ENCODE measurements at regions of chr15 and their contacts with region 1.

Region 1: DNA sequence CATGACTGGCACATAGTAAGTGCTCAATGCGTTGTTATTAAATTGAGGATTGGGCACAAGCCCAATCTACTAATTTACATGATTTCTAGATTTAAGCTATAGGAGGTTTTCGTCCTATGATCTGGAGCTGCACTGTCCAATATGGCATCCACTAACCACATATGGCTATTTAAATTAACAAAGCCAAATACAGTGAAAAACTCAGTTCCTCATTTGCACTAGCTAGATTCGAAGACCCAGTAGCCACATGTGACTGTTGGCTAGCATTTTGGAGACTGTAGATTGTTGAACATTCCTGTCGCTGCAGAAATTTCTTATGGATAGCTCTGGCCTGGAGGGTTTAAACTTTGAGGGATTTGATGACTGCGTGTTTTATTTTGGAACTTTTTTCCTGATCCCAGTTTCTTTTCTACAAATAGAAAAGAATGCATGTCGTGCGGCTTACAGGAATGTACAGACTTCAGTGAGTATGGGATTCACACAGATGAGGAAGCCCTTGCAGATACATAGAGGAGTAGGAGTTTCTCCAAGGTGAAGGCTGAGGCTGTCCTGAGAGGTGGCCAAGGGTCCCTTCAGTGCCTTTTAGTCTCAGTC is 82.8 kb downstream of the SLCO3A1 start:
- DNase-seq: no peak
- ATAC-seq: no peak
- H3K4me3 ChIP-seq: no peak overlapping the region
- H3K4me3 Mint-ChIP-seq: no peak overlapping the region
- H3K27ac ChIP-seq: no peak overlapping the region
- H3K27ac Mint-ChIP-seq: no peak overlapping the region
- H3K4me1 ChIP-seq: no peaks in the 10 kb centered on the region
- H3K4me1 Mint-ChIP-seq: peaks cover 25% of the 10 kb centered on the region
- H3K27me3 ChIP-seq: no peaks in the 10 kb centered on the region
- H3K27me3 Mint-ChIP-seq: no peaks in the 10 kb centered on the region
- CTCF ChIP-seq: no peak

Region 2: DNA sequence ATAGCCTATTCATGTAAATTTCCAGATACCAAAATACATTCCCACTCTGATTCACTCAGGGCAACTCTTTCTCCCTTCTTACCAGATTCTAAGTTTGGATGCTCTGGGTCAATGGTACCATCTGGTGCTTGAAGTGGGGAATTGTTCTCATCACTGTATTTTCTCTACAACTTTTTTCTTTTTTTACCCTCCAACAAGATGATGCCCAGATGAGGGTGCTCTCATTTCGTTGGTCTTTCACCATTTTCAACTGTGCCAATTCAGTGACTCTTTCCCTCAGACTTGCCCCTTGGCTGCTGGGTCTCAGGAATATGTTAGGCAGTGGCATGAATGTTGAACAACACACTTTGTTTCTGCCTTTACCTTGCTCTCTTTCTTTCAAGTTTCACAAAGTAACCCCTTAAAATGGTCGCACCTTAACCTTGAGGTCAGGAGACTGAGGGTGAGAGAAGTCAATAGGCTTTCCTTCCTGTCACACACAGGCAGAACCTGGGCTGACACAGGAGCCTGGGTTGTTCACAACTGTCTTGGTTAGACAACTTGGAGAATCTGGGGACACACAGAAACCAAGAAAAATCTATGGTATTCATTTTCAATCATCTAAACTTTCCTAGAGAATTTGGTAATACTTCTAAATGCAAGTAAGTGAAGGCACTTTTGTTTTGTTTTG is 413.5 kb before region 1 on chr15:
- CTCF ChIA-PET with region 1: no interaction called
- POLR2A ChIA-PET with region 1: no interaction called
- intact Hi-C with region 1: loop called in 1 of 2 experiments (anchors 5 kb)
- DNase-seq: peak in 2 of 9 experiments; percentile 56 to 66
- ATAC-seq: no peak
- H3K4me3 ChIP-seq: no peak overlapping the region
- H3K4me3 Mint-ChIP-seq: no peak overlapping the region
- H3K27ac ChIP-seq: no peak overlapping the region
- H3K27ac Mint-ChIP-seq: peak overlapping the region; percentile 33
- H3K4me1 ChIP-seq: peaks cover 14% of the 10 kb centered on the region
- H3K4me1 Mint-ChIP-seq: peaks cover 11% of the 10 kb centered on the region
- H3K27me3 ChIP-seq: no peaks in the 10 kb centered on the region
- H3K27me3 Mint-ChIP-seq: peaks cover 10% of the 10 kb centered on the region
- CTCF ChIP-seq: peak; percentile 33

Region 3: DNA sequence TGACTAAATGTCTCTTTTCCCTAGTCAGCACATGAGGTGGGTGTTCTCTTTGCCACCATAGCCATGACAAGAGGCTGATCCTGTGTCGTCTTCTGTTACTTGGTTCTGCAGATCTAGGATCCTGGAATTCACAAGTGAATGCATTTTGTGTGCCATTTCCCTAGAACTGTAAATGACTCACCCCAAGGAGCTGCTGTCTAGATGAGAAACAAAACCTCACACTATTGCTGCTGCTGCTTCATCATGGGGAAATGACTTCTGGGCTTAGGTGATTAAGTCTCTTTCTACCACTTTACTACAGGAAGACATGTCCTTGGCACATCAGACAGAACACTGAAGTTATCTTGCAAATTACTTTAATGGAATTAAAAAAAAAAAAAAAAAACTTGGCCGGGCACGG is 27.9 kb before region 1 on chr15:
- CTCF ChIA-PET with region 1: no interaction called
- POLR2A ChIA-PET with region 1: no interaction called
- intact Hi-C with region 1: no loop called
- DNase-seq: no peak
- ATAC-seq: no peak
- H3K4me3 ChIP-seq: no peak overlapping the region
- H3K4me3 Mint-ChIP-seq: no peak overlapping the region
- H3K27ac ChIP-seq: no peak overlapping the region
- H3K27ac Mint-ChIP-seq: no peak overlapping the region
- H3K4me1 ChIP-seq: no peaks in the 10 kb centered on the region
- H3K4me1 Mint-ChIP-seq: peaks cover 21% of the 10 kb centered on the region
- H3K27me3 ChIP-seq: no peaks in the 10 kb centered on the region
- H3K27me3 Mint-ChIP-seq: no peaks in the 10 kb centered on the region
- CTCF ChIP-seq: no peak

Region 4: GRCh38 chr15:92473756-92474155 is 537.5 kb after region 1 on chr15:
- CTCF ChIA-PET with region 1: no interaction called
- POLR2A ChIA-PET with region 1: no interaction called
- intact Hi-C with region 1: no loop called
- DNase-seq: no peak
- ATAC-seq: no peak
- H3K4me3 ChIP-seq: no peak overlapping the region
- H3K4me3 Mint-ChIP-seq: no peak overlapping the region
- H3K27ac ChIP-seq: no peak overlapping the region
- H3K27ac Mint-ChIP-seq: no peak overlapping the region
- H3K4me1 ChIP-seq: no peaks in the 10 kb centered on the region
- H3K4me1 Mint-ChIP-seq: no peaks in the 10 kb centered on the region
- H3K27me3 ChIP-seq: no peaks in the 10 kb centered on the region
- H3K27me3 Mint-ChIP-seq: peaks cover 13% of the 10 kb centered on the region
- CTCF ChIP-seq: no peak

Measured in CD8-positive, alpha-beta T cell (primary cell).